Uterus (tissue), 4 donors: ENCODE measurements at regions of chr1 and their contacts with region 1.

Region 1: DNA sequence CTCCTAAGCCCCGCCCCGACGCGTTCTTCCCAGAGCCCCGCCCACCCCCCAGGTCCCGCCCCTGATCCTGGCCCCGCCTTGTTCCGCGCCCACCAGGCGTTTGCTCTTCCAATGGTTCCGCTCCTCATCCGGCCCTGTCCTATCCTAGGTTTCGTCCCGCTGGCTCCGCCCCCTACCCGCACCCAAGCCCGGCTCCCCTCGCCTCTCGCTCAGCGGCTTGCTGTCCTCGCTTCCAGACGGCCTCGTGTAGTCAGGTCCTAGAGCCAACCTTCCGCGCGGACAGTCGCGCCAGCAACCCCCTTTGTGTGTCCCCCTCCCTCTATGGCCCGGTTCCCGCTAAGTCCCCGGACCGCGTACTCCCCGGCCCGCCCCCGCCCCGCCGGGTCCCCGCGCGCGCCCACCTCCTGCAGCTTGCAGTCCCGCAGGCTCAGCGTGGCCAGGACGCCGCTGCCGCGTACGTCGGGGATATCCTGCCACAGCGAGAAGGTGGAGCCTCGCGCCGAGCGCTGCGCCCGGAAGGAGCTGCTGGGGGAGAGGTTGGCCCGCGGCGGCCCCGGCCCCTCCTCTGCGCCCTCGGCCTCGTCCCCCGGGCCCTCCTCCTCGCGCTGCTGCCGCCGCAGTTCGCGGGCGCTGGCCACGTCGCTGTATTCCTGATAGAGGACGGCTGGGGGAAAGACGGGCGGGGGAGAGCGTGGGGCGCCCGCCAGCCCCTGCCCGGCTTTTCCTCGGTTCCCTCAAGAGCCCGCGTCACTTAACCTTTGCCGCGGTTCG is 5.7 kb downstream of the ARHGEF19 start:
- DNase-seq: peak; percentile 98 to 99
- H3K4me3 ChIP-seq: peak overlapping the region; percentile 53 to 58
- H3K27ac ChIP-seq: peak overlapping the region; percentile 90 to 97
- H3K4me1 ChIP-seq: peaks cover 0 to 7% of the 10 kb centered on the region in 2 donors
- H3K27me3 ChIP-seq: no peaks in the 10 kb centered on the region
- CTCF ChIP-seq: peak in 1 of 4 experiments; percentile 3
- POLR2A ChIP-seq: peak; percentile 83 to 85

Region 2: DNA sequence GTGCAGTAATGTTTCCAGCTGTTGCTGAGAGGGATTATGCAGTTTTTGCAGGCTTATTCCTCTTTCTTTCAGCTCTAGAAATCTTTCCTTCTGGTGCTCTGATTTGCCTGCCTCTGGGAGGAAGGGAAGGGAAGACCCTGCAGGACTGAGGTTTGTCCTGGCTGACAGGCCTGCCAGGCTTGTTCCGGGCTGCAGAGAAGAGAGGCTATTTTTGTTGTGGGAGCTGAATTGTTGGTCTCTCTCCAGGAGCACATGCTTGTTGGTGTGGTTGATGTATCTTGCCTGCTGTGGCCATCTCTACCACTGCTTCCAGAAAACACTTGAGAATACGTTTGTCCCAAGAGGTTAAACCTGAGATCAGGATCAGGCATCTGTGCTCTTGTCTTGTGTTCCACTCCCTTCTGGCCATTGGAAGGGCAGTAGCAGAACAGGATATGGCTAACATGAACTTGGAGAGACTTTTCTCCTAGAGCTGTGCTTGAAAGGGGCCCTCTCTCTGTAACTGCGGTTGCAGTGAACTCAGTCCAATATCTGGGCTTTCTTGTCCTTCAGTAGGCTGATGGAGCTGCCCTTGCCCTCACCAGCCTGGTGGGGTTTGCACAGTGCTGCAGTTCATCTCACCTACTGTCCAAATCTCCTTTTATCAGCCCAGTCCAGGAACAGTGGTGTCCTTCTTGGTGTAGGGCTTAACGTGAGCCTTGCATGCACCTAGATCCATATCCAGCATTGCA is 492.2 kb before region 1 on chr1:
- intact Hi-C with region 1: no loop called
- DNase-seq: peak in 1 of 2 donors; percentile 42
- H3K4me3 ChIP-seq: no peak overlapping the region
- H3K27ac ChIP-seq: peak overlapping the region; percentile 7 to 70
- H3K4me1 ChIP-seq: peaks cover 0 to 4% of the 10 kb centered on the region in 2 donors
- H3K27me3 ChIP-seq: no peaks in the 10 kb centered on the region
- CTCF ChIP-seq: no peak
- POLR2A ChIP-seq: no peak

Region 3: GRCh38 chr1:16366722-16367257 is 160.1 kb after region 1 on chr1 and contains the start of gene SZRD1:
- intact Hi-C with region 1: loop called (anchors 10 kb)
- DNase-seq: peak; percentile 97 to 98
- H3K4me3 ChIP-seq: peak within 1 kb of the TSS; percentile 61 to 93
- H3K27ac ChIP-seq: peak within 1 kb of the TSS; percentile 98 to 99
- H3K4me1 ChIP-seq: peaks cover 9 to 24% of the 10 kb centered on the region in 2 donors
- H3K27me3 ChIP-seq: no peaks in the 10 kb centered on the region
- CTCF ChIP-seq: peak in 1 of 4 experiments; percentile 24
- POLR2A ChIP-seq: no peak
- total RNA-seq, gene SZRD1: 24.4 to 126 (median 47.2) TPM